PC-9 (cell line): ENCODE measurements at regions of chr9 and their contacts with region 1.

Region 1: GRCh38 chr9:33924978-33925797 is 108.2 kb downstream of the UBE2R2 start:
- DNase-seq: no peak
- H3K4me3 ChIP-seq: no peak overlapping the region
- H3K27ac ChIP-seq: no peak overlapping the region
- H3K4me1 ChIP-seq: no peaks in the 10 kb centered on the region
- H3K27me3 ChIP-seq: no peaks in the 10 kb centered on the region
- CTCF ChIP-seq: peak; percentile 47

Region 2: DNA sequence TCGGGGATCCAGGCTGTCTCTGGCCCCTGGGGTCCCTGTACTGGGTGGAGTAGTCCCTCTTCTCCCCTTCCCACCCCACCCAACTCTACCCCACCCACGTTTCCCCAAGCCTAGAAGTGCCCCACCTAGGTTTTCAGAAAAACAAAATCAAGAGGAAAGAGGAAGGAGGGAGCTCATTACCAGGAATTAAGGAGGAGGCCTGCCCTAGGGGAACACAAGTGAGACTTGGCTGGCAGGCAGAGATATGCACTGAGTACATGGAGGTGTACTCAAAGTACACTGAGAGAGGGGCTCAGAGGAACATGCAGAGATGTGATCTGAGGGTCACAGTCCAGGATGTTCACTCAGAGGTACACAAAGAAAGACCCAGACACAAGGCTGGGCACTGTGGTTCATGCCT is 488.0 kb before region 1 on chr9:
- CTCF ChIA-PET with region 1: no interaction called
- POLR2A ChIA-PET with region 1: interaction called, 25 read pairs
- intact Hi-C with region 1: no loop called
- DNase-seq: no peak
- H3K4me3 ChIP-seq: no peak overlapping the region
- H3K27ac ChIP-seq: no peak overlapping the region
- H3K4me1 ChIP-seq: peaks cover 43% of the 10 kb centered on the region
- H3K27me3 ChIP-seq: no peaks in the 10 kb centered on the region
- CTCF ChIP-seq: no peak

Region 3: DNA sequence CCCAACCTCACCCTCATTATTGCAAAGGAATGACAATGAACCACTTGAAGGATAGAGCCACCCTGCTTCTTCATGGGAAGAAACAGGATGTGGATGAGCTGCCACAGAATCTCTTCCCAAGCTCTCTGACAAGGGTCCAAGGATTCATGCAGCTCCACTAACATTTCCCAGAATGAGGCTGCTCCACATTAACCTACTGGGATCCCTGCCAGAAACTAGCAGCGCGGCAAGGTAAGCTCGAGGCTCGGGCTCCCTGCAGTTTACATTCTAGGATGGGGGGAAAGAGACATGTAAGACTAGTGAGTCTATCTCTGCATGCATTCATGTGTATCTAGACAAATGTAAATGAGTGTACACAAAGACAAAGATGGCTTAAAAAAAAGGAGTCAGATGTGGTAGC is 189.2 kb after region 1 on chr9:
- CTCF ChIA-PET with region 1: no interaction called
- POLR2A ChIA-PET with region 1: no interaction called
- intact Hi-C with region 1: no loop called
- DNase-seq: no peak
- H3K4me3 ChIP-seq: no peak overlapping the region
- H3K27ac ChIP-seq: no peak overlapping the region
- H3K4me1 ChIP-seq: no peaks in the 10 kb centered on the region
- H3K27me3 ChIP-seq: no peaks in the 10 kb centered on the region
- CTCF ChIP-seq: no peak

Region 4: DNA sequence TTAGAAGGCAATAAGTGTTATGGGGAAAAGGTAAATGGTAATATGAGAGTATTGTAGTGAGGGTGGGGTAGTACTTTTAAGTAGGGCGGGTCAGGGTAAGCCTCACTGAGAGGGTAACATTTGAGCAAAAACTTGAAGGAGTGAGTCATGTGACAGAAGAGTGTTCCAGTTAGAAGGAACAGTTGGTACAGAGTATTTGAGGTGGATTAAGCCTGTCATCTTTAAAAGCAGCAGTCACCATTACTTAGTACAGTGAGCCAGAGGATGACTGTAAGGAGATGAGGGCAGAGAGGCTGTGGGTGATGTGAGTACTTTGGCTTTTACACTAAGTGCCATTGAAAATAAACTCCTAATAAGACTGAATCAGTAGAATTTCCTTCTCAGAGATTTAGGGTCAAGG is 308.5 kb after region 1 on chr9:
- CTCF ChIA-PET with region 1: no interaction called
- POLR2A ChIA-PET with region 1: no interaction called
- intact Hi-C with region 1: no loop called
- DNase-seq: no peak
- H3K4me3 ChIP-seq: no peak overlapping the region
- H3K27ac ChIP-seq: no peak overlapping the region
- H3K4me1 ChIP-seq: no peaks in the 10 kb centered on the region
- H3K27me3 ChIP-seq: no peaks in the 10 kb centered on the region
- CTCF ChIP-seq: no peak

Region 5: DNA sequence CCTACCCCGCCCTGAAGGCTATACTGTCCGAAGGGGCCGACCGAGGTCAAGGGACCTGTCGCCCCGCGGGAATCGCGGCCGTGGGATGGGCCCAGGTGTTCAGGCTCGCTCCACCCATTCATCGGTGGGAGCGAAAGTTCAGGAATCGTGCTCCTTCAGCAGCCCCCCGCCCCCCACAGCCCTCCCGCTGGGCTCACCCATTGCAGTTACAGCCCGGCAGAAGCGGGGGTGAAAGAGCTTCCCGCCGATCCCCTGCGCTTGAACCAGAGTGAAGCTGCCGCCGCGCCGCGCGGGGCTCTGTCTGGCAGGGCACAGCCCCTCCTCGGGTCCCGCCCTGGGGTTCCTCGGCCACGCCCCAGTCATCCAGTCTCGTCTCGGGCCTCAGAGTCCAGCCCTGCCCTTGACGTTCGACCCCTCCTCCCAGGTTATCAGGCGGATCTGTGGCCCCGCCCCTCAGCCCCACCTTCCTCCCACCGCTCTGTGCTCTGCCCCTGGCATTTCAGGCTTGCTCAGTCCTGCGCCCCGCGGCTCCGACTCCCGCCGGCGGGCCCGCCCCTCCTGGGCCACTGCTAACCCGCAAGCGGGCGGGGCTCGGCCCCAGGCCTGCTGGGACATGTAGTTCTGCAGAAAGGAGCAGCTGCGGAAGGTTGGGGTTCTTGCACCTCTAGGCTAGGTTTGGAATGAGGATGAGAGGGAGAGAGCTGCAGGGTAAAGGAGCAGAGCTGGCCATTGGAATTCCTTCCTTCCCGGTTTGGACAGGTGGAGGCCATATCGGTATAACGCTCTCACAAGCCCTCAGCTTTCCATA is 451.6 kb after region 1 on chr9 and contains the start of gene MYORG:
- CTCF ChIA-PET with region 1: no interaction called
- POLR2A ChIA-PET with region 1: no interaction called
- intact Hi-C with region 1: loop called (anchors 10 kb)
- DNase-seq: peak; percentile 87 to 96
- H3K4me3 ChIP-seq: peak within 1 kb of the TSS; percentile 62
- H3K27ac ChIP-seq: no peak within 1 kb of the TSS
- H3K4me1 ChIP-seq: peaks cover 7% of the 10 kb centered on the region; the same call in 1 of the 2 replicates
- H3K27me3 ChIP-seq: no peaks in the 10 kb centered on the region
- CTCF ChIP-seq: no peak
- total RNA-seq, gene MYORG: 3.0 and 3.1 TPM in 2 replicates